Activated CD4-positive, alpha-beta memory T cell treated with anti-CD3 and anti-CD28 coated beads for 36 hours (primary cell): ENCODE measurements at regions of chr2 and their contacts with region 1.

Region 1: DNA sequence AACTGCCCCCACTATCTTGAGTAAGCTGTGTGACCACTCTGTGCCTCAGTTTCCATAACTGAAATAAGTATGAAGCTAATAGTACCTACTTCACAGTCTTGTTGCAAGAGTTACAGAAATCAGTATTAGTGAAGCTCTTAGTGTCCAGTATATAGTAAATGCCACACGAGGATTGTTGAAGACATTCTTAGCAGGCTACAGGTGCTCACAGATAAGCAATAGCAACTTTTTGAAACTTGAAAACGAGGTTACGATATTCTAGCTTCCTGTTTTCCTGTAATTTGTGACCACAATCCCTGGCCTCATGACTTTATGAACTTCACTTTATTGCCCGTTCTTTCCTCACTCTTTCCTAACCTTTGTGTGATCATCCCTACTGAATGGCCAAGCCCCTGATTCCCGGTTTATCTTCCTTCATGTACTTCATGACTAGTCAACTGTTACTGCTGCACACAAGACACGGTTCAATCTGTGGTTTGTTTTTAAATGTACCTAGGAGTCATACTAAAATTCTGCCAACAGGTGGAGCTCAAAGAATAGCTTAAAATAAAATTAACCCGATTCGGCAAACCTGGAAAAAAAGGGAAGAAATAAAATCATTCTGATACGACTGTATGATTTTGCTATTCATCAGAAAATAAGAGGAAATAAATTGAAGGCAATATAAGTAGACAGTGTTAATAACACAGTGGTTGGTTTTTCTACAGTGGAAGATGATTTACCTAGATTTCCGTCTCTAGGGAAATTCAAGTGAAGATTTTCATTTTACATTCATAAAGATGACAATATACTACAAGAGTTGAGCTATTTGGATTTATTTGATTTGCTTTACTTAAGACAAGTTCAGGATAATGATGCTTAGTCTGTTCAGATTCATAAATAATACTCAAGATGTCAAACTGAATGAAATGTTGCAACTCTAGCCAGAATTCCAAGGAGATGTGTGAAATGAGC is 38.1 kb upstream of the STAT1 start:
- DNase-seq: no peak
- H3K4me3 Mint-ChIP-seq: no peak overlapping the region
- H3K27ac Mint-ChIP-seq: no peak overlapping the region
- H3K4me1 Mint-ChIP-seq: peaks cover 21% of the 10 kb centered on the region
- H3K27me3 Mint-ChIP-seq: no peaks in the 10 kb centered on the region

Region 2: GRCh38 chr2:190875891-190876290 is 176.2 kb before region 1 on chr2:
- CTCF ChIA-PET with region 1: no interaction called
- POLR2A ChIA-PET with region 1: no interaction called
- intact Hi-C with region 1: no loop called
- DNase-seq: peak; percentile 49
- H3K4me3 Mint-ChIP-seq: peak overlapping the region; percentile 45
- H3K27ac Mint-ChIP-seq: peak overlapping the region; percentile 71
- H3K4me1 Mint-ChIP-seq: peaks cover 22% of the 10 kb centered on the region
- H3K27me3 Mint-ChIP-seq: peaks cover 3% of the 10 kb centered on the region

Region 3: GRCh38 chr2:191038241-191038725 is 13.8 kb before region 1 on chr2:
- CTCF ChIA-PET with region 1: interaction called, 35 read pairs
- POLR2A ChIA-PET with region 1: no interaction called
- intact Hi-C with region 1: no loop called
- DNase-seq: peak; percentile 63
- H3K4me3 Mint-ChIP-seq: no peak overlapping the region
- H3K27ac Mint-ChIP-seq: peak overlapping the region; percentile 68
- H3K4me1 Mint-ChIP-seq: peaks cover 48% of the 10 kb centered on the region
- H3K27me3 Mint-ChIP-seq: no peaks in the 10 kb centered on the region

Region 4: GRCh38 chr2:191105082-191105481 is 53.0 kb after region 1 on chr2:
- CTCF ChIA-PET with region 1: interaction called, 13 read pairs
- POLR2A ChIA-PET with region 1: no interaction called
- intact Hi-C with region 1: no loop called
- DNase-seq: no peak
- H3K4me3 Mint-ChIP-seq: no peak overlapping the region
- H3K27ac Mint-ChIP-seq: peak overlapping the region; percentile 44
- H3K4me1 Mint-ChIP-seq: peaks cover 76% of the 10 kb centered on the region
- H3K27me3 Mint-ChIP-seq: no peaks in the 10 kb centered on the region

Region 5: DNA sequence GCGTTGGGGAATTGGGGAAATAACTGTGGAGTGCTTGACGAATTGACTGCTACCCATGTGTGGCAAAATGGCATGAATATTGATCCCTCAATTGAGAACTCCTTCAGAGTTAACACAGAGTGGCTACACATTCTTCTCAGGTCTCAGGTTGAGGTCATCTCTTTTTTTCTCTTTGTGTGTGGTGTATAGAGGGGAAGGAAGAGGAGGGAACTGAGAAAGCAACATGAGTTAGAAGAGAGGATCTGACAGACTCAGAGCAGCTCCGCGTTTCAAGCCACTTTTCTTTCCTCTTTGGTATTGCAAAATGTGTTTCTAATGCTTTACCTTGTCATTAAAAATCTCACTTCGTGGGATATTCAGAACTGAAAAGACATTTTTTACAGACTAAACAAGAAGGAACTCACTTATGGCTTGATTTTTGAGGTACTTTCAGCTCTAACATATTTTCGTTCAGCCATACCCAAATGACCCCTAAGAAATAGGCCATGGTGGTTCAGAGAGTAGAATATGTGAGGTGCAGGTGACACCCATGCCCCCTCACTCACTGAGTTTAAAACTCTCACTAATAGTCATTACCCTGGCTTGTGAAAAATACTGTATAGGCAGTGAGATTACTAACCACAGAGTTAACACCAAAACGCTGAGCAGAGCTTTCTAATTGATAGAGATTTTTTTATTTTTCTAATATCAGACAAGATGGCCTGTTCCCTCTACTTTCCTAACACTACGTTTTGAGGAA is 76.2 kb after region 1 on chr2:
- CTCF ChIA-PET with region 1: interaction called, 16 read pairs
- POLR2A ChIA-PET with region 1: no interaction called
- intact Hi-C with region 1: no loop called
- DNase-seq: no peak
- H3K4me3 Mint-ChIP-seq: peak overlapping the region; percentile 52
- H3K27ac Mint-ChIP-seq: peak overlapping the region; percentile 28
- H3K4me1 Mint-ChIP-seq: peaks cover 70% of the 10 kb centered on the region
- H3K27me3 Mint-ChIP-seq: no peaks in the 10 kb centered on the region

Region 6: DNA sequence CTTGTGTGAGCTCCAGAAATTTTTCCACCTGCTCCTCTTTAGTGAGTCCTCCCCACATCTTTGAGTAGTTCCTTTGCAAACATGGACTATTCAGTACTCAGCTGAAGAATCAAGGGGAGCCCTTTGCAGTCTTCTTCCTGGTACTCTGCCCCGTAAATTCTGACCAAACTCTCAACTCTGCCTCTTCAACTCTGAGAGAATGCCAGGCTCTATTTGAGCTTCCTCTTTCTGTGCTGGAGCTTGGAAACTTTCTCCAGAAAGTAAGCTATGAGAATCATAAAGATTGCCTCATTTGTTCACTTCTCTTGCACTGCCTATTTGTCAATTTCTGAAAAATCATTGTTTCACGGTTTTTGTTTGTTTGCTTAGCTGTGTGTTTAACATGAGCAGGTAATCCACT is 106.1 kb after region 1 on chr2:
- CTCF ChIA-PET with region 1: interaction called, 412 read pairs
- POLR2A ChIA-PET with region 1: interaction called, 9 read pairs
- intact Hi-C with region 1: loop called (anchors 1 kb)
- DNase-seq: no peak
- H3K4me3 Mint-ChIP-seq: no peak overlapping the region
- H3K27ac Mint-ChIP-seq: no peak overlapping the region
- H3K4me1 Mint-ChIP-seq: peaks cover 17% of the 10 kb centered on the region
- H3K27me3 Mint-ChIP-seq: no peaks in the 10 kb centered on the region

Region 7: DNA sequence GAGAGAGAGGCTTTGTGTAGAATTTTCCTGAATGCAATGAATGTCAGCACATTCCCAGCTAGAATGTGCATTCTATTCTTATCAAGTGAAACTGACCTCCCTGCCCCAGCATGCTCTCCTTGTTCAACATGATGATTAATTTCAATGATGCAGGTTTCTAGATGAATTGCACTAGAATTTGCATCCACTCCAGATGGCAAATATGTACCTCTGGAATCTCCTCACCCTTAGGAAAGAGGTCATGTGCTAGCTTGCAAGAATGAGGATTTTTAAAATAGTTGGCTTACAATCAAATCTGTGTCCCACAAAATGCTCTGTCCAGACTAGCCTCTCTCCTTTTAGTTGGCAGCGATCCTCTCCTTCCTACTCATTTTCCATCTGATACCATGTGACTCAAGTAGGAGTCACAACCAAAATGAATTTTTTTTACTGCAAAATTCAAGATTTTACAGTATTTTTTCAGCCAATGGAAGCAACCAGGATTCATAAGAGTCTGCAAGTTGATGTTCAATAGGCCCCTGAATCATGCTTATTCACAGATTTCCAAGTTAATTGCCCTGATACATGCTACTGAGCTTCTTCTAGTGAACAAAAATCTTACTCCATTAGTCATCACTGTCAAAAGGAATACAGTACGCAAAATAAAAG is 119.7 kb after region 1 on chr2:
- CTCF ChIA-PET with region 1: interaction called, 44 read pairs
- POLR2A ChIA-PET with region 1: no interaction called
- intact Hi-C with region 1: no loop called
- DNase-seq: no peak
- H3K4me3 Mint-ChIP-seq: no peak overlapping the region
- H3K27ac Mint-ChIP-seq: peak overlapping the region; percentile 16
- H3K4me1 Mint-ChIP-seq: peaks cover 58% of the 10 kb centered on the region
- H3K27me3 Mint-ChIP-seq: no peaks in the 10 kb centered on the region

Region 8: GRCh38 chr2:191376981-191377629 is 325.0 kb after region 1 on chr2:
- CTCF ChIA-PET with region 1: no interaction called
- POLR2A ChIA-PET with region 1: no interaction called
- intact Hi-C with region 1: loop called (anchors 10 kb)
- DNase-seq: peak; percentile 53
- H3K4me3 Mint-ChIP-seq: no peak overlapping the region
- H3K27ac Mint-ChIP-seq: no peak overlapping the region
- H3K4me1 Mint-ChIP-seq: peaks cover 8% of the 10 kb centered on the region
- H3K27me3 Mint-ChIP-seq: peaks cover 1% of the 10 kb centered on the region